IMR-90 (cell line): ENCODE measurements at regions of chr15 and their contacts with region 1.

Region 1: GRCh38 chr15:40506964-40507571 is 36.3 kb downstream of the CHST14 start:
- DNase-seq: peak; percentile 64
- ATAC-seq: peak; percentile 96
- H3K4me3 ChIP-seq: peak overlapping the region; percentile 26; the same call in 1 of the 2 replicates
- H3K27ac ChIP-seq: no peak overlapping the region
- H3K4me1 ChIP-seq: peaks cover 4% of the 10 kb centered on the region; the same call in 1 of the 2 replicates
- H3K27me3 ChIP-seq: peaks cover 26% of the 10 kb centered on the region
- CTCF ChIP-seq: peak; percentile 79
- POLR2A ChIP-seq: no peak
- RAD21 ChIP-seq: peak; percentile 69

Region 2: DNA sequence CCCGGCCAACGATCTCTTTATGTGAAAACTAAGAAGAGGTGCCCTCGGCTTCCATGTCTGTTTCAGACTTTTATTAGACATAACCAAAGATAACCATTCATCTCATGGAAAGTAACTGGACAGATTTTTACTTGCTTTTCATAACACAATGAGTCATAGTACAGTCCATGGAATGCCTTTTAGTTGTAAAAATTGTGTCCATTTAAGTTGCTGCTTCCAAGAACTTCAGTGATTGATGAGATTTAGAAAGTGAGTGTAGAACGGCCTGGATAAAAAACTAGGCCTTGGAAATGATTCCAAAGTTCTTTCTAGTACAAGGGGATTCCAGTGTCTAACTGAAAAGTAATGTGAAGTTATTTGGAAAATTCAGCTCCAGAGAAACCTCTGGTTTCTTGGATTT is 562.3 kb before region 1 on chr15:
- CTCF ChIA-PET with region 1: no interaction called
- POLR2A ChIA-PET with region 1: no interaction called
- dilution Hi-C with region 1: no loop called
- in situ Hi-C with region 1: no loop called
- intact Hi-C with region 1: no loop called
- DNase-seq: peak; percentile 97
- ATAC-seq: peak; percentile 51
- H3K4me3 ChIP-seq: no peak overlapping the region
- H3K27ac ChIP-seq: no peak overlapping the region
- H3K4me1 ChIP-seq: peaks cover 14% of the 10 kb centered on the region
- H3K27me3 ChIP-seq: no peaks in the 10 kb centered on the region
- CTCF ChIP-seq: no peak
- POLR2A ChIP-seq: no peak
- RAD21 ChIP-seq: no peak; the same call in 1 of the 2 replicates

Region 3: DNA sequence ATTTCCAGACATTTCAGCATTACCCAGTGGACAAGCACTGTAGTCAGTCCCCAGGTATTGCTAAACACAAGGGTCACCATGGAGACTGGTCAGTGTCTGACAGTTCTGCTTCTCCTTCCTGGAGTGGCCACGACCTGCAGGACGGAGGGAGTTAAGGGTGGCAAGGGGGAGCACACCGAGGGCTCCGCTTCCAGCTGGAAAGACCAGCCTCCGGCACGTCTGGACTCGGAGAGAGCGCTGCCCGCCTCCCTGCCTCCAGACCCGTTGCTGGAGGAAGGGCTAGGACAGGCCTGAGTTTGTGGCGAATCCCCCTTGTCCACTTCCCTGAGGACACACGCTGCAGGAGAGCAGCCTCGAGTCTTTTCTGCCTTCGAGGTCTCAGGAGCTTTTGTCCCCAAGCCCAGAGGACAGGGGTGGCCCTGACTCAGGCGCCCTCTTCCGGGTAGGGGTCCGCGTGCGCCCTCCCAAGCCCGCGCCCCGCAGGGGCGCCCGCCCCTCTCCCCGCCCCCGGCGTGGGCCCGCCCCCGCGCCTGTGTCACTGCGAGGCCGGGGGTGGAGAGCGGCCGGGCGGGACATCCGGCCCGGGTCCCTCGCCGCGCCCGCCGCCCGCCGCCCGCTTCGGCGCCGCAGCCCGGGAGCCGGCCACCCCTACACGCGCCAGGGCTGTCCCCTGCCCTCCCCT is 36.5 kb before region 1 on chr15 and contains the start of gene CHST14:
- CTCF ChIA-PET with region 1: no interaction called
- POLR2A ChIA-PET with region 1: no interaction called
- dilution Hi-C with region 1: no loop called
- in situ Hi-C with region 1: no loop called
- intact Hi-C with region 1: loop called (anchors 1 kb)
- DNase-seq: peak; percentile 43
- ATAC-seq: peak; percentile 92
- H3K4me3 ChIP-seq: peak within 1 kb of the TSS; percentile 79
- H3K27ac ChIP-seq: peak within 1 kb of the TSS; percentile 91
- H3K4me1 ChIP-seq: peaks cover 12% of the 10 kb centered on the region
- H3K27me3 ChIP-seq: 0 out of 2 replicates have a peak, but pooled peaks cover 1% of the 10 kb centered on the region
- CTCF ChIP-seq: no peak
- POLR2A ChIP-seq: no peak
- RAD21 ChIP-seq: no peak
- total RNA-seq, gene CHST14: 3.3 and 3.8 TPM in 2 replicates

Region 4: GRCh38 chr15:41001524-41002214 is 494.6 kb after region 1 on chr15:
- CTCF ChIA-PET with region 1: no interaction called
- POLR2A ChIA-PET with region 1: no interaction called
- dilution Hi-C with region 1: no loop called
- in situ Hi-C with region 1: no loop called
- intact Hi-C with region 1: no loop called
- DNase-seq: no peak
- ATAC-seq: peak; percentile 35
- H3K4me3 ChIP-seq: no peak overlapping the region
- H3K27ac ChIP-seq: peak overlapping the region; percentile 82
- H3K4me1 ChIP-seq: peaks cover 17% of the 10 kb centered on the region
- H3K27me3 ChIP-seq: no peaks in the 10 kb centered on the region
- CTCF ChIP-seq: no peak
- POLR2A ChIP-seq: no peak
- RAD21 ChIP-seq: no peak